CD8-positive, alpha-beta memory T cell (primary cell): ENCODE measurements at regions of chr2 and their contacts with region 1.

Region 1: GRCh38 chr2:206159346-206160124 is at the starts of genes EEF1B2 and NDUFS1:
- DNase-seq: peak; percentile 95 to 98 (median 97)
- H3K4me3 ChIP-seq: peak within 1 kb of the TSS; percentile 95
- H3K4me3 Mint-ChIP-seq: peak within 1 kb of the TSS; percentile 92 to 99 (median 96)
- H3K27ac ChIP-seq: peak within 1 kb of the TSS; percentile 84
- H3K27ac Mint-ChIP-seq: peak within 1 kb of the TSS; percentile 95 to 100 (median 98)
- H3K4me1 ChIP-seq: peaks cover 34% of the 10 kb centered on the region
- H3K4me1 Mint-ChIP-seq: peaks cover 48 to 71% (median 66%) of the 10 kb centered on the region in 3 donors
- H3K27me3 ChIP-seq: no peaks in the 10 kb centered on the region
- H3K27me3 Mint-ChIP-seq: no peaks in the 10 kb centered on the region
- total RNA-seq, gene EEF1B2: 1,019 to 1,025 TPM
- total RNA-seq, gene NDUFS1: 102 to 106 TPM

Region 2: GRCh38 chr2:206085742-206086445 is 73.6 kb before region 1 on chr2 and contains the start of gene INO80D:
- CTCF ChIA-PET with region 1: interaction called, 4 read pairs
- POLR2A ChIA-PET with region 1: interaction called, 10 read pairs
- DNase-seq: peak; percentile 68 to 91 (median 86)
- H3K4me3 ChIP-seq: peak within 1 kb of the TSS; percentile 90
- H3K4me3 Mint-ChIP-seq: peak within 1 kb of the TSS; percentile 98 to 100 (median 99)
- H3K27ac ChIP-seq: peak within 1 kb of the TSS; percentile 85
- H3K27ac Mint-ChIP-seq: peak within 1 kb of the TSS; percentile 97 to 100 (median 100)
- H3K4me1 ChIP-seq: peaks cover 20% of the 10 kb centered on the region
- H3K4me1 Mint-ChIP-seq: peaks cover 41 to 58% (median 54%) of the 10 kb centered on the region in 3 donors
- H3K27me3 ChIP-seq: no peaks in the 10 kb centered on the region
- H3K27me3 Mint-ChIP-seq: peaks cover 0 to 3% of the 10 kb centered on the region in 2 donors
- total RNA-seq, gene INO80D: 20.7 to 22.4 TPM